Activated T-helper 1 cell treated with anti-CD3 and anti-CD28 coated beads, Interleukin-12 subunit alpha, Interleukin-12 subunit beta, Interleukin-2, Interleukin-4 antibody, amounts not matched to agents 30 ng/mL and 10 ng/mL and 1 ng/mL, durations not matched to agents 14 hours and 24 hours and 36 hours (primary cell): ENCODE measurements at regions of chr3 and their contacts with region 1.

Region 1: DNA sequence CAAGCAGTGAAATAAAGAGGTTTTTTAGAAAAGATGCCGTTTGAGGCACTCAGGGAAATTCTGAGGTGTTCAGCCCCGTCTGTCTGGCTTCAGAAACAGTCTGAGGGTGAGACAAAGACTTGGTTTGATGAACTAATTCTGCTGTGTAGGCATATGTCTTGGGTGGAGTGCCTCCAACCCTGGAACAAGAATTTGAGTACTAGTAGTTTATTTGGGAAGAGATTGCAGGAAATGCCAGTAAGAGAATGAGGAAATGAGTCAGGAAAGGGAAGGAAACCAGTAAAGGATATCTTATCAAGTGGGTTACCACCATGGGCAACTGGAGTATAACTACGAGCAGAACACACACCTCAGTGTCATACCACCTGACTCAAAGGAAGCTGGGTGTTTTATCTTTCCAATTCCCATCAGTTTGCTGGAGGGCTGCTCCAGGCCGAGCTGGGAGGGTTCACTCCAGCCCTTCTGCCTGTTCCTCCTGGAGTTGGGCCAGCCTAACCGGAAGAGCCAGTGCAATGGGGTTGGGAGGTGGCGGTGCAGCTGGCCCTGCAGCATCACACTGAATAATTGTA is 75.3 kb downstream of the TGFBR2 start:
- DNase-seq: no peak
- H3K4me3 Mint-ChIP-seq: peak overlapping the region; percentile 72
- H3K27ac Mint-ChIP-seq: peak overlapping the region; percentile 64
- H3K4me1 Mint-ChIP-seq: peaks cover 94% of the 10 kb centered on the region
- H3K27me3 Mint-ChIP-seq: no peaks in the 10 kb centered on the region

Region 2: GRCh38 chr3:30426293-30426993 is 255.3 kb before region 1 on chr3:
- intact Hi-C with region 1: no loop called
- DNase-seq: no peak
- H3K4me3 Mint-ChIP-seq: no peak overlapping the region
- H3K27ac Mint-ChIP-seq: no peak overlapping the region
- H3K4me1 Mint-ChIP-seq: no peaks in the 10 kb centered on the region
- H3K27me3 Mint-ChIP-seq: no peaks in the 10 kb centered on the region

Region 3: GRCh38 chr3:30667280-30667651 is 14.5 kb before region 1 on chr3:
- intact Hi-C with region 1: loop called (anchors 2 kb)
- DNase-seq: peak; percentile 39
- H3K4me3 Mint-ChIP-seq: no peak overlapping the region
- H3K27ac Mint-ChIP-seq: peak overlapping the region; percentile 83
- H3K4me1 Mint-ChIP-seq: peaks cover 97% of the 10 kb centered on the region
- H3K27me3 Mint-ChIP-seq: no peaks in the 10 kb centered on the region

Region 4: GRCh38 chr3:30704931-30705890 is 23.5 kb after region 1 on chr3:
- intact Hi-C with region 1: loop called (anchors 2 kb)
- DNase-seq: no peak
- H3K4me3 Mint-ChIP-seq: no peak overlapping the region
- H3K27ac Mint-ChIP-seq: no peak overlapping the region
- H3K4me1 Mint-ChIP-seq: peaks cover 14% of the 10 kb centered on the region
- H3K27me3 Mint-ChIP-seq: no peaks in the 10 kb centered on the region